ENCODE measurements at regions of chr18 and their contacts with region 1.

Region 1: DNA sequence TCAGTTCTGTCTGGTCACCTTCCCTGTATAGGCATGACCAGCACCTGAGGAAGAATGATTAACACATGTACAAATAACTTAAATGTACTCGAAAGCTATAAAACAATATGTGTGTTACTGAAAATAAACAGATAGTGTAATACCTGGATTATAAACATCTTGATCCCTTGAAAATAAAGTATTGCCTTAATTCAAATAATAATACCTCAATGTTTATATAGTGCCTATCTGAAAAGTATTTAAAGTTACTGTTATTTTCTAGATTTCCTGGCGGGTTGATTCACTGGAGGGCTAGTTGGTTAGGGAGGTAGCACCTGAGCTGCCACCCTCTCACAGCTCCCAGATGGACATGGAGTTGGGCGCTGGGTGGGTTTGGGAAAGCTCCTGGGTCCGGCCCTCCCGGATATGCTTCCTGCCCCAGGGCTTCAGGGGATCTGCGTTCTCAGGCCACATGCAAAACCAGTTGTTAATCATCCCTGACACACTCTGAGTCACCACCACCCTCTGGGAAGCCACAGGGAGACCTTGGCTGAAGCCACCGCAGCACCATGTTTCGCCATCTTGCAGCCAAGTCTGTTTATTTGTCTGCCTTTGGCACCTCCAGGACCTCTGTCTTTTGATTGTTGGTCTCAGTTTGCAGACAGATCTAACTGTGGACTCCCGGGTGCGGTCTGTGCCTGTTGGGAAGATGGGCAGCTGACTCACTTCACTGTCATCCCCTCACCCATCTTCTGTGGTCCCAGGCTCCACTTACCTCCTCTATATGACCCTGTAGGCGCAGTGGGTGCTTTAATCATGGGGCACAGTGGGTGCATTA is 35.3 kb downstream of the RAB31 start:
- DNase-seq: peak; percentile 87
- H3K4me3 ChIP-seq: no peak overlapping the region
- H3K27ac ChIP-seq: peak overlapping the region; percentile 83
- H3K4me1 ChIP-seq: peaks cover 37% of the 10 kb centered on the region
- H3K27me3 ChIP-seq: no peaks in the 10 kb centered on the region
- CTCF ChIP-seq: no peak
- POLR2A ChIP-seq: no peak

Region 2: DNA sequence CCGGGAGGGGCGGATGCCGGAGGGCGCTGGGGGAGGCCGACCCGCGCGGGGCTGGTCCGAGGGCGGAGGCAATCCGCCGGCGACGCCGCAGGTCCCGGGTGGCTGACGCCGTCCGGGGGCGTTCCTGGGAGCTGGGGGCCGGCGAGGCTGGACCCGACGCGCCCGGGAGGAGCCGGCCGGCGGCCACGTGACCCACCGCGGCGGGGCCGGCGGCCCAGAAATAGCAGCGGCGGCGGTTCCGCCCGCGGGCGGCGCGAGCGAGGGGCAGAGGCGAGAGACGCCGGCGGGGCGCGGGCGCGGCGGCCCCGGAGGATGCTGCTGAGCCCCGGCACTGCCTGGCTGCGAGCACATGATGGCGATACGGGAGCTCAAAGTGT is 35.4 kb before region 1 on chr18 and contains the start of gene RAB31:
- CTCF ChIA-PET with region 1: interaction called, 4 read pairs
- POLR2A ChIA-PET with region 1: no interaction called
- dilution Hi-C with region 1: no loop called
- intact Hi-C with region 1: loop called (anchors 1 kb)
- DNase-seq: peak; percentile 67
- H3K4me3 ChIP-seq: peak within 1 kb of the TSS; percentile 79 to 98 (median 91)
- H3K27ac ChIP-seq: peak within 1 kb of the TSS; percentile 70
- H3K4me1 ChIP-seq: peaks cover 23% of the 10 kb centered on the region
- H3K27me3 ChIP-seq: no peaks in the 10 kb centered on the region
- CTCF ChIP-seq: no peak
- POLR2A ChIP-seq: peak; percentile 52
- total RNA-seq, gene RAB31: 27.9 and 30.5 TPM in 2 replicates

Region 3: DNA sequence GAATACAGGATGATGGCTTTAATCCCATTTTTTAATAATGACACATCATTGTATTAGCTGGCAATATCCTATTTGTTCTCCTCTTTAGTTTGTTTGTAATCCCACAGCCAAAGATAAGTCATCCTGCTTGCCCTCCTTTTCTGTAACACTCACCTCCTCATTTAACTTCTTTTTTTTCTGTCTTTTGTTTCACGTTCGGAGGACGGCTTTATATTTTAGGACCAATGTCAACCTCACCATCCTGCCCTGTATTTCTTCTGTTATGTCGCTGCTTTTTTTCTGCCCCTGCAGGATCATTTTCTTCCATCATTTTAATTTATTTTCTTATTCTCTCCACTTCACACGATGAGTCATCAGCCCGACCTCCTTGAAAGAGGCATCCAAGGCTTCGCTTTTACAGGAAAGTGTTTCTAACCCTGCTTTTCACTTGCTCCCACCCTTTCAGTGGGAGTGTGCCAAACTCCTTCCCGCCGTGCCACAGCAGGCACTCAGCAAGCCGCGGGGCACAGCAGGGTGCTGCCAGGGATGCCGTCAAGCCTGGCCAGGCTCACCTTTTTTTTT is 23.9 kb before region 1 on chr18:
- CTCF ChIA-PET with region 1: no interaction called
- POLR2A ChIA-PET with region 1: no interaction called
- dilution Hi-C with region 1: no loop called
- intact Hi-C with region 1: loop called (anchors 1 kb)
- DNase-seq: peak; percentile 85
- H3K4me3 ChIP-seq: peak overlapping the region in 2 of 3 experiments; percentile 2 to 40
- H3K27ac ChIP-seq: peak overlapping the region; percentile 58
- H3K4me1 ChIP-seq: peaks cover 6% of the 10 kb centered on the region
- H3K27me3 ChIP-seq: no peaks in the 10 kb centered on the region
- CTCF ChIP-seq: no peak
- POLR2A ChIP-seq: no peak

Region 4: DNA sequence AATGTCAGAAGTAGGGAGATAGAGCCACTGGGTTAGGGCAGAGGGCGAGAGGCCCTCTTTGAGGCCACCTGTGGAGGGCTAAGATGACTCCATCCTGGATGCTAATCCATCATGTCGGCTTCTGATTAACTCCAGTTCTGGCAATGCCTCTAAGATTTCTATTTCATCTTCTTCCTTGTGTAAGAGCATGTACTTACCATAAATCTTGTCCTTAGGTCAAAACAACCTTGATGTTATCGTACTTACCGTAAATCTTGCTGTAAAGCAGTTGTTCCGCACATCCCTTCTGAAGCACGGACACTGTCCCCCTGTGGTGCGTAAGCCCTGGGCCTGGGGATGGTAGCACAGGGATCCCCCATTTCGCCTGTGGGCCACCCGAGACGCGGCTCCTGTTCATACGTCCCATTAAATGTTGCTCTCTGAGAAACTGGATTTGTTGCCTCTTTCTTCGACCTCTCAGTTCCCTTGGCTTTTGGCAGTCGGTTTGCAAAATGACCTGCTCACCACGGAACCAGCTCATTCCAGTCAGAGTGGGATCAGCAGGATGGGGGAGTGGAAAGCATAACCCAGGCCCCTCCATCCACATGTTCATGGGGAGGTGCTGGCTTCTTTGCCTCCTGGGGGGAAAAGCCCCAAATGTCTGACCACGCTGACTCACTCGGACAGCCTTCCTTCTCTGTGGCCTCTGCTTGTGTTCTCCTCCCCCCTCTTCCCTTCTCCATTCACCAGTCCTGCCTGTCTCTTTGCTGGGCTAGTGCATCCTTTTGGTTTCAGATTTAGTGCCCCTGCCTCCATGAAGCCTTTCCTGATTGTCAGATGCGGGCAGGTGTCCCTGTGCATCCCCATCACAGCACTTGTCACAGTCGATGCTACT is 14.6 kb after region 1 on chr18:
- CTCF ChIA-PET with region 1: interaction called, 7 read pairs
- POLR2A ChIA-PET with region 1: no interaction called
- dilution Hi-C with region 1: no loop called
- intact Hi-C with region 1: loop called (anchors 1 kb)
- DNase-seq: no peak
- H3K4me3 ChIP-seq: no peak overlapping the region
- H3K27ac ChIP-seq: no peak overlapping the region
- H3K4me1 ChIP-seq: peaks cover 15% of the 10 kb centered on the region
- H3K27me3 ChIP-seq: no peaks in the 10 kb centered on the region
- CTCF ChIP-seq: no peak
- POLR2A ChIP-seq: no peak

Measured in endothelial cell of umbilical vein (primary cell).